SK-N-SH (cell line): ENCODE measurements at regions of chr20 and their contacts with region 1.

Region 1: GRCh38 chr20:3218307-3218988 is 9.2 kb downstream of the ITPA start:
- DNase-seq: peak; percentile 95
- H3K4me3 ChIP-seq: no peak overlapping the region; a peak in 1 of 4 replicates
- H3K27ac ChIP-seq: no peak overlapping the region; a peak in 1 of 4 replicates
- H3K4me1 ChIP-seq: peaks cover 0 to 2% of the 10 kb centered on the region in 2 experiments; a peak in 1 of 4 replicates
- H3K27me3 ChIP-seq: no peaks in the 10 kb centered on the region
- CTCF ChIP-seq: peak; percentile 88
- EP300 ChIP-seq: no peak
- RAD21 ChIP-seq: peak; percentile 69

Region 2: DNA sequence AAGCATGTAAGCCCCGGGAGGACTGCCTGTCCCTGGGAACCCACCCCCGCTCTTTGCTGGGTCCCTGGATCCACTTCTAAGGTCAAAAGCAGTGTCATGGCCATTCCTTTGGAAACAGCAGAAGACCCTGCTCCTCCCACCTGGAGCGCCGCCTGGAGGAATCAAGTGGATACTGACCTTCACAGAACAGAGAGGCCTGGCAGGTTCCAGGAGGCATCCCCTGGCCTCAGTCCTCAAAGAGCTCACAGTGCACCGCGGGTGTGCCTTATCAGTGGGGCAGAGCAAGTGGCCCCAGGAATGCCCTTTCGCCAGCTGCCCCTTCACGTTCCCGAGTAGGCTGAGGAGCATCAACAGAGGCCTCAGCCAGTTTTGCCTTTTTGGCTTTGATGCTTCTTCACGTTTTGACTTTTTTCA is 31.6 kb after region 1 on chr20:
- CTCF ChIA-PET with region 1: interaction called, 16 read pairs
- POLR2A ChIA-PET with region 1: no interaction called
- DNase-seq: no peak
- H3K4me3 ChIP-seq: no peak overlapping the region; a peak in 1 of 4 replicates
- H3K27ac ChIP-seq: no peak overlapping the region
- H3K4me1 ChIP-seq: no peaks in the 10 kb centered on the region
- H3K27me3 ChIP-seq: no peaks in the 10 kb centered on the region
- CTCF ChIP-seq: peak; percentile 24; the same call in 1 of the 2 replicates
- EP300 ChIP-seq: no peak
- RAD21 ChIP-seq: no peak

Region 3: DNA sequence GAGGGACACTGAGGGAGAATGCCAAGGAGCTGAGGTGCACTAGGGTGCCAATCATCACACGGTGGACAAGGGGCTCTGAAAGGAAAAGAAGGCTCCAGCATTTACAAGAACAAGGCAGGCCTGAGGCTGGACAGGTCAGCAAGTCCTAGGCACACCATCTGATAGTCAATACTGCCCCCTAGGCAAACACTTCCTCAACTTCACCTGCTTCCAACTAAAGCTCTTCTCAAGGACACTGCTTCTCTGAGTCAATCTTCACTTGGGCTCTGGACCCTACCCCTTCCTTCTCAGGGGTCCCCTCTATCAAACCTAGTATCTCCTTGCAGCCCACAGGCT is 58.2 kb after region 1 on chr20:
- CTCF ChIA-PET with region 1: interaction called, 28 read pairs
- POLR2A ChIA-PET with region 1: no interaction called
- DNase-seq: no peak
- H3K4me3 ChIP-seq: no peak overlapping the region
- H3K27ac ChIP-seq: no peak overlapping the region
- H3K4me1 ChIP-seq: peaks cover 0 to 3% of the 10 kb centered on the region in 2 experiments; a peak in 1 of 4 replicates
- H3K27me3 ChIP-seq: no peaks in the 10 kb centered on the region
- CTCF ChIP-seq: peak; percentile 28
- EP300 ChIP-seq: no peak
- RAD21 ChIP-seq: peak; percentile 44

Region 4: GRCh38 chr20:3282271-3283221 is 64.1 kb after region 1 on chr20:
- CTCF ChIA-PET with region 1: interaction called, 28 read pairs
- POLR2A ChIA-PET with region 1: no interaction called
- DNase-seq: peak; percentile 46
- H3K4me3 ChIP-seq: no peak overlapping the region
- H3K27ac ChIP-seq: peak overlapping the region in 1 of 2 experiments; percentile 94; a peak in 2 of 4 replicates
- H3K4me1 ChIP-seq: peaks cover 0 to 26% of the 10 kb centered on the region in 2 experiments; a peak in 2 of 4 replicates
- H3K27me3 ChIP-seq: no peaks in the 10 kb centered on the region
- CTCF ChIP-seq: no peak
- EP300 ChIP-seq: peak in 1 of 2 experiments; percentile 68; a peak in 1 of 4 replicates
- RAD21 ChIP-seq: peak; percentile 25; the same call in 1 of the 2 replicates

Region 5: GRCh38 chr20:3307078-3307477 is 88.6 kb after region 1 on chr20:
- CTCF ChIA-PET with region 1: interaction called, 12 read pairs
- POLR2A ChIA-PET with region 1: no interaction called
- DNase-seq: no peak
- H3K4me3 ChIP-seq: no peak overlapping the region
- H3K27ac ChIP-seq: no peak overlapping the region
- H3K4me1 ChIP-seq: no peaks in the 10 kb centered on the region
- H3K27me3 ChIP-seq: no peaks in the 10 kb centered on the region
- CTCF ChIP-seq: no peak
- EP300 ChIP-seq: no peak
- RAD21 ChIP-seq: no peak

Region 6: DNA sequence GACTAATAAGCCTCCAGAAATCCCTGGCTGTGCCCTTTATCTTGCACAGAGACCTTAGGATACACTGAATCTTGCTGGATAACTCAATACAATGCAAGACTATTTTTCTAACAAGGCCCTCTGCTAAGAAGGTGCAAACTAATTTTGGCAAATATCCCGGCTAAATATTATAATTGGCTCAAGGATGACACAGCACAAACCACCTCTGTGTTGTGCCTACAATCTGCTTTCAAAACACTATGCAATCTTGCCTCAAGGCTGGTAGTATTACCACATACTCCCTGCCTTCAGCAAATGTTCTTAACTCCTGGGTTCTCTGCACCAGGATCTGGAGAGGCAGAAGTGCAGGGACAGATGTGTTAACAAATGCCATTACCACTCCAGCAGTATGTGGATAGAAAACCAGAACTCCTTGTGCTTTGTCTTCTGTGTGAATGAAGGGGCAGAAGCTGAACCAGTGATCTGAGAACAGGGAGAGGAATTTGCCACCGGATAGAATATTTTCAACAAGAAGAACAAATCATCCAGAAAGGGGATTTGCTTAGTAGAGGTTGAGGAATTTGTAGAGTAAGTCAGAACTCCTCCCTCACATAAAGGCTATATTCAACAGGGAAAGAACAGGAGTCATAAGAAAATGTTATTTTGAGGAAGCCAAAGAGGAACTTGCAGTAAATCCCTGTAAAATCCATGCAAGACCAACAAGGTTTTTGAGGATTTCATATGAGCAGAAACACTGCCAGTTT is 94.7 kb after region 1 on chr20:
- CTCF ChIA-PET with region 1: interaction called, 93 read pairs
- POLR2A ChIA-PET with region 1: interaction called, 4 read pairs
- DNase-seq: no peak
- H3K4me3 ChIP-seq: no peak overlapping the region
- H3K27ac ChIP-seq: peak overlapping the region in 1 of 2 experiments; percentile 25; a peak in 2 of 4 replicates
- H3K4me1 ChIP-seq: peaks cover 3 to 9% of the 10 kb centered on the region in 2 experiments; a peak in 2 of 4 replicates
- H3K27me3 ChIP-seq: no peaks in the 10 kb centered on the region
- CTCF ChIP-seq: no peak
- EP300 ChIP-seq: no peak
- RAD21 ChIP-seq: no peak

Region 7: DNA sequence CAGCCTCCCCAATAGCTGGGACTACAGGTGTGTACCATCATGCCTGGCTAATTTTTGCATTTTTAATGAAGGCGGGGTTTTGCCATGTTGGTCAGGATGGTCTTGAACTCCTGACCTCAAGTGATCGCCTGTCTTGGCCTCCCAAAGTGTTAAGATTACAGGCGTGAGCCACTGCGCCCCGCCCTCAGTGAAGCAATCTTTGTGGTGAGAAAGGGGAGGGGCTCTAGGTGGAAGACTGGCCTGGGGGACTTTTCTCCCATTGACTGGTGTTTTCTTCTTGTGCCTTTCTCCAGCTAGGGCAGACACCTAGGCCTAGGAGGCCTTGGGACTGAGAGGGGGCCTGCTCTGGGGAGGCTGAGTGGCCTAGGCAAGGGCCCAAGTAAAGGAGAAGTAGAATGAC is 105.0 kb after region 1 on chr20:
- CTCF ChIA-PET with region 1: interaction called, 19 read pairs
- POLR2A ChIA-PET with region 1: interaction called, 3 read pairs
- DNase-seq: no peak
- H3K4me3 ChIP-seq: no peak overlapping the region
- H3K27ac ChIP-seq: no peak overlapping the region
- H3K4me1 ChIP-seq: no peaks in the 10 kb centered on the region
- H3K27me3 ChIP-seq: no peaks in the 10 kb centered on the region
- CTCF ChIP-seq: no peak
- EP300 ChIP-seq: no peak
- RAD21 ChIP-seq: no peak